CD8-positive, alpha-beta T cell (primary cell): ENCODE measurements at regions of chr17 and their contacts with region 1.

Region 1: DNA sequence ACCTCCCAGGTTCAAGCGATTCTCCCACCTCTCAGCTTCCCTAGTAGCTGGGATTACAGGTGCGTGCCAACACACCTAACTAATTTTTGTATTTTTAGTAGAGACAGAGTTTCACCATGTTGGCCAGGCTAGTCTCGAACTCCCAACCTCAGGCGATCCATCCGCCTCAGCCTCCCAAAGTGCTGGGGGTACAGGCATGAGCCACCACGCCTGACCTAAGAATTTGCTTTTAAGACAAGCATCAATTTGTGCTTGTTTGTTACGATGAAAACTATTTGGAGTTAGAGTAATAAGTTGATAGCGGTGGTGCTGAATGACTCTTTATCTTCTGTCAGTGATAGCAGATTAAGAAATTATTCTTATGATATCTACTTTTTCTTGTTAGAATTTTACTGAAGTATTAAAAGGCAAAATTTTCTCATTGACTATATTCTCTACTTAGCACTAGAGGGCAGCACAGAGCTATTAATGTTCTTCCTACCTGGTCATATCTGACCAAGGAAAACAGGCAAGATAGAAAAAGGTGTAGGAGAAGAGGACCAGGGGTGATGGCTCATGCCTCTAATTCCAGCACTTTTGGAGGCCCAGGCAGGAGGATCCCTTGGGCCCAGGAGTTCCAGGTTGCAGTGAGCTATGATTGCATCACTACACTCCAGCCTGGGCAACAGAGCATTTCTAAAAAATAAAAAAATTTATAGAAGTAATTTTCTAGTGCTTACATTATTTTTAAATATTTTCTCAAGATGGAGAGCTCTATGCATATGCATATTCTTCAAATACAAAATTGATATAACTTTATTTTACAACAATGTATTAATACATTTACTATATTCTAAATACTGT is 24.5 kb downstream of the STXBP4 start:
- DNase-seq: peak in 3 of 9 experiments; percentile 10 to 69 (median 61)
- ATAC-seq: peak; percentile 38
- H3K4me3 ChIP-seq: no peak overlapping the region
- H3K4me3 Mint-ChIP-seq: no peak overlapping the region
- H3K27ac ChIP-seq: no peak overlapping the region
- H3K27ac Mint-ChIP-seq: no peak overlapping the region
- H3K4me1 ChIP-seq: no peaks in the 10 kb centered on the region
- H3K4me1 Mint-ChIP-seq: no peaks in the 10 kb centered on the region
- H3K27me3 ChIP-seq: no peaks in the 10 kb centered on the region
- H3K27me3 Mint-ChIP-seq: no peaks in the 10 kb centered on the region
- CTCF ChIP-seq: peak; percentile 77

Region 2: DNA sequence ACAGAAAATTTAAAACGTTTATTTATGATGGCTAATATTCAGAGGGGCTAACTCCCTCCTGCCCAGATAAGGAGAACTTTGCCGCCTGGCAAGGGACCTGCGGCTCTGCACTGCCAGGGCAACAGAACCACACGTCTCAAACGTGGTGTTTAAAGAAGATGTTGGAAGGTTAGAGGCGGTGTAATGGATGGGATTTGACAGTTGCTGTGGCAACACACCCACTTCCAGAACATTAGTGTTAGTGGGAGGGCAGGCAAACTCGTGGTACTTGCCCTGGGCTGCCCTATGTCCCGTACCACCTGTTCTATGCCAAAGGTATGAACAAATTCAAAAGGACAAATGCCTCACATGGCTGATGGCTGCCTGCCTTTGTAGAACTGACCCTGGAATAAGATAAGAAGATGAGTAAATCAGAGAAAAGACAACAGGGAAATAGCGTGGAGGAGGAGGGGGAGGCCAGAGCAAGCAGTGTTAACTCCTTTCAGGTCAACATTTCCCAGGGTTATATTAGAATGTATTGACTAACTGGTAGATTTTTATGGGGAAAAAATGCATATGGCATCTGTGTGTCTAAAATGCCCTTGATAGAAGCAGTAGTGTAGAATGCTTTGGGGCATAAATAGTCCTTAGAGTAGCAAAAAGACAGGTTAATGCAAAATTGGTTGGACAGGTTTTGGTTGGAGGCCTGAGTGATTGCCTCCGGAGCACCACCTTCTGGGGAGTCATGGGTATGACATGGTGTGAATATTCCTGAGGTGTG is 302.6 kb after region 1 on chr17:
- CTCF ChIA-PET with region 1: interaction called, 31 read pairs
- POLR2A ChIA-PET with region 1: no interaction called
- intact Hi-C with region 1: loop called (anchors 1 kb)
- DNase-seq: peak; percentile 20 to 70 (median 50)
- ATAC-seq: peak; percentile 57
- H3K4me3 ChIP-seq: no peak overlapping the region
- H3K4me3 Mint-ChIP-seq: no peak overlapping the region
- H3K27ac ChIP-seq: no peak overlapping the region
- H3K27ac Mint-ChIP-seq: no peak overlapping the region
- H3K4me1 ChIP-seq: no peaks in the 10 kb centered on the region
- H3K4me1 Mint-ChIP-seq: no peaks in the 10 kb centered on the region
- H3K27me3 ChIP-seq: no peaks in the 10 kb centered on the region
- H3K27me3 Mint-ChIP-seq: peaks cover 3% of the 10 kb centered on the region
- CTCF ChIP-seq: peak; percentile 88

Region 3: GRCh38 chr17:55348749-55349354 is 355.8 kb after region 1 on chr17:
- CTCF ChIA-PET with region 1: interaction called, 42 read pairs
- POLR2A ChIA-PET with region 1: no interaction called
- intact Hi-C with region 1: loop called (anchors 1 to 2 kb)
- DNase-seq: peak in 8 of 9 experiments; percentile 1 to 61 (median 28)
- ATAC-seq: peak; percentile 54
- H3K4me3 ChIP-seq: no peak overlapping the region
- H3K4me3 Mint-ChIP-seq: no peak overlapping the region
- H3K27ac ChIP-seq: no peak overlapping the region
- H3K27ac Mint-ChIP-seq: no peak overlapping the region
- H3K4me1 ChIP-seq: peaks cover 8% of the 10 kb centered on the region
- H3K4me1 Mint-ChIP-seq: peaks cover 9% of the 10 kb centered on the region
- H3K27me3 ChIP-seq: no peaks in the 10 kb centered on the region
- H3K27me3 Mint-ChIP-seq: peaks cover 4% of the 10 kb centered on the region
- CTCF ChIP-seq: peak; percentile 84

Region 4: DNA sequence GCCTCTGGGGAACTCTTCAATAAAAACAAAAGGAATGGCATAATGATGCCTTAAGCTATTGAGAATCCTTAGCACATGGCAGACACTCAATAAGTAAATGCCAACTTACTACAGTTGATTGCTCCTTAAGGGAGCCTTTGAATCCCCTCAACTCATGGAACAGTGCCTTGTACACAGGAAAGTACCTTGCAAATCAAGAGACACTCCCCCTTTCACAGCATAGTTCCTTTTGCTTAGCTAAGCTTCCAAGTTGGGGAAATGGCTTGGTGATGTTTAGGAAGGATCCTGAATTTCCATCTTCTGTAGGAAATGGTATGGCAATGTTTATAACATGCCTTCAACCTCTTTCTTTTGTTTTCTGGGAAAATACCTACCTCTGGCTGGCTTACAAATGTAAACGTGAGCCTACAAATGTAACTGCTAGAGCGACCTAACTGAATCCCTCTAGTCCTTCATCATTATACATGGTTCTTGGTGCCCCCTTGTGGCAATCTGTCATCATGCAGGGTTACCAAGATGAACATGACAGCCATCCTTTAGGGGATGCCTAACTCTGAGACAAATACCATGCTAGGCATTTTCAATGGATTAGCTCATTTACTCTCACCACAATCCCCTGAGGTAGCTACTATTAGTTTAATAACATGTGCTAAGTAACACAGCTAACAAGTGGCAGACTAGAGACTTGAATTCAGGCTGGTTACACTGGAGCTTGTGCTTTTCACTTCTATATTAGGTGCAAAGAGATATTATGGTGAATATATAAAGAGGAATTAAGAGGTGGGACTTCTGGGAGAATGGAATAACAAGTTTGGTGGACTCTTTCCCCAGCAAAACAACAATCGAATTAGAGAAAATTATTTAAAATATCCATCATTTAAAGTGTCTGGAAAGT is 363.7 kb after region 1 on chr17:
- CTCF ChIA-PET with region 1: interaction called, 21 read pairs
- POLR2A ChIA-PET with region 1: interaction called, 3 read pairs
- intact Hi-C with region 1: loop called (anchors 1 to 2 kb)
- DNase-seq: peak; percentile 27 to 72 (median 63)
- ATAC-seq: peak; percentile 71
- H3K4me3 ChIP-seq: no peak overlapping the region
- H3K4me3 Mint-ChIP-seq: no peak overlapping the region
- H3K27ac ChIP-seq: no peak overlapping the region
- H3K27ac Mint-ChIP-seq: no peak overlapping the region
- H3K4me1 ChIP-seq: no peaks in the 10 kb centered on the region
- H3K4me1 Mint-ChIP-seq: no peaks in the 10 kb centered on the region
- H3K27me3 ChIP-seq: no peaks in the 10 kb centered on the region
- H3K27me3 Mint-ChIP-seq: peaks cover 9% of the 10 kb centered on the region
- CTCF ChIP-seq: peak; percentile 76

Region 5: DNA sequence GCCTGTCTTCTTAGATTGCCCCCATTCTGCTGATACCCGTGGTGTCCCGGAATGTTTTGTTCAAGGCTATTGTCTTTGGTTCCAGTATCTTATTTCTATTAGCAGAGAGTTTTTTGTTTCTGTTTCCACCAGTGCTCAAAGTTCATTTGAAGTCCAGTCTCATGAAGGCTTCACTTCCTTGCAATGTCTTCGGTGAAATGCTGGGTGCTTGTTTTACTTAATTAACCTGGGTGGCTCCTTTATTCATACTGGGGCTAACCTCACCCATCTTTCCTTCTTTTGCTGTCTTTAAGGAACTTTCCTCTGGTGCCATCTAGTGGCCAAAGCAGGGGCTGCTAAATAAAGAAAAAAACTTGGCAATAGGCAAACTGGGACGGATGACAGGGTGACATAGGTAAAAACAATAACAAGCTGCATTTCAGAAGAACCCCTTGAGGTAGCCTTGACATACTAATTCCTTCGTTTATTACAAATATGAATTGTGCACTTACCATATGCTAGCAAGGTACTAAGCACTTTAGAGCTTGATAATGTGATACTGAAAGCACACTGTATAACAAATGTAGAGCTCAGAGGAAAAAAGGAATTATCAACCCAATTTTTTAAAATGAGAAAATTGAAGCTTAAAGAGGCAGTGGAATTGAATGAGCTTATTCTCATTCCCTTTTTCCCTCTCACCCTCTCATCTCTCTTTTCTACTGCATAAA is 521.0 kb after region 1 on chr17:
- CTCF ChIA-PET with region 1: interaction called, 6 read pairs
- POLR2A ChIA-PET with region 1: no interaction called
- intact Hi-C with region 1: loop called in 1 of 2 experiments (anchors 1 kb)
- DNase-seq: peak; percentile 49 to 74 (median 69)
- ATAC-seq: peak; percentile 57
- H3K4me3 ChIP-seq: no peak overlapping the region
- H3K4me3 Mint-ChIP-seq: no peak overlapping the region
- H3K27ac ChIP-seq: no peak overlapping the region
- H3K27ac Mint-ChIP-seq: no peak overlapping the region
- H3K4me1 ChIP-seq: no peaks in the 10 kb centered on the region
- H3K4me1 Mint-ChIP-seq: no peaks in the 10 kb centered on the region
- H3K27me3 ChIP-seq: no peaks in the 10 kb centered on the region
- H3K27me3 Mint-ChIP-seq: peaks cover 12% of the 10 kb centered on the region
- CTCF ChIP-seq: peak; percentile 96